Dendritic cell treated with granulocyte-macrophage colony-stimulating factor and Interleukin-4, amounts not matched to agents 40 ng/mL and 50 ng/mL, for 4 days (primary cell): ENCODE measurements at regions of chr5 and their contacts with region 1.

Region 1: DNA sequence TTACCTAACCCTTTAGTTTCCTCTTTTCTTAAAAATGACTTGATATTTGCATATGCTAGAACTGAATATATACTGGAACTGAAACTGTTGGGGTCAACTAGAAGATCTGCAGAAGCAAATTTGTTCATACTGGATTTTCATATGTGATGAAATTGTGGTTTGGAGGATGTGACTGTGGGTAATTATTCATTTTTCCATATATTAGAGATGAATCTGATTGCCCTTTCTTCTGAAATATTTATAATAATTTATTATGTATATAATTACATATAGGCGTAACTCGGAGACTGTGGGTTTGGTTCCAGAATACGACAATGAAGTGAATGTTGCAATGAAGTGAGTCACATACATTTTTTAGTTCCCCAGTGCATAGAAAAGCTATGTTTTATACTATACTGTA is 149.1 kb downstream of the ATP10B start:
- H3K4me3 Mint-ChIP-seq: no peak overlapping the region
- H3K27ac Mint-ChIP-seq: no peak overlapping the region
- H3K4me1 Mint-ChIP-seq: peaks cover 40% of the 10 kb centered on the region
- H3K27me3 Mint-ChIP-seq: peaks cover 2% of the 10 kb centered on the region

Region 2: GRCh38 chr5:160685695-160686094 is 17.2 kb before region 1 on chr5:
- intact Hi-C with region 1: no loop called
- H3K4me3 Mint-ChIP-seq: no peak overlapping the region
- H3K27ac Mint-ChIP-seq: no peak overlapping the region
- H3K4me1 Mint-ChIP-seq: peaks cover 10% of the 10 kb centered on the region
- H3K27me3 Mint-ChIP-seq: peaks cover 1% of the 10 kb centered on the region

Region 3: GRCh38 chr5:160835376-160835775 is 132.4 kb after region 1 on chr5:
- intact Hi-C with region 1: loop called (anchors 10 kb)
- H3K4me3 Mint-ChIP-seq: no peak overlapping the region
- H3K27ac Mint-ChIP-seq: no peak overlapping the region
- H3K4me1 Mint-ChIP-seq: peaks cover 20% of the 10 kb centered on the region
- H3K27me3 Mint-ChIP-seq: no peaks in the 10 kb centered on the region

Region 4: DNA sequence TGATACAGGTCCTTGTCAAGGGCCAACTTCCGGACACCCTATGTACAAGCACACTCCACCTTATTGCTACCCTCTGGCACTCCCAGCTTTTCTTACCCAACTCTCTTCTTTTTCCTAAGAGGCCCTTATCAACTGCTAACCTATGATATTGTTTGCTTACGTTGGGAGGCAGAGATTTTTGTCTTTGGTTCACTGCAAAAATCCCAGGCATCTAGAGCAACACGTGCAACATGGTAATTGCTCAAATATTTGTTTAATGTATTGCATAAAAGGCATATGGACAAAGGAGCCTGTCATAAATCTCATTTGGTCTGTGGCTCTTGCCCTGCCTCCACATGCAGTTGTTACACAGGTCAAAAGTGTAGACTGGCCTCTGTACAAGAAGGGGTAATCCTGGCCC is 184.8 kb after region 1 on chr5:
- intact Hi-C with region 1: no loop called
- H3K4me3 Mint-ChIP-seq: no peak overlapping the region
- H3K27ac Mint-ChIP-seq: no peak overlapping the region
- H3K4me1 Mint-ChIP-seq: no peaks in the 10 kb centered on the region
- H3K27me3 Mint-ChIP-seq: peaks cover 12% of the 10 kb centered on the region